Right lobe of liver (tissue), 6 donors: ENCODE measurements at regions of chr20 and their contacts with region 1.

Region 1: GRCh38 chr20:45373353-45374100 is 4.6 kb downstream of the TP53TG5 start:
- DNase-seq: peak; percentile 91 to 93 (median 92)
- ATAC-seq: peak; percentile 89 to 94 (median 92)
- H3K4me3 ChIP-seq: peak overlapping the region; percentile 45 to 59 (median 58)
- H3K27ac ChIP-seq: peak overlapping the region; percentile 22 to 60 (median 24)
- H3K4me1 ChIP-seq: peaks cover 0 to 7% (median 3%) of the 10 kb centered on the region in 4 donors
- H3K27me3 ChIP-seq: no peaks in the 10 kb centered on the region
- CTCF ChIP-seq: peak; percentile 81 to 94 (median 92)
- POLR2A ChIP-seq: no peak

Region 2: DNA sequence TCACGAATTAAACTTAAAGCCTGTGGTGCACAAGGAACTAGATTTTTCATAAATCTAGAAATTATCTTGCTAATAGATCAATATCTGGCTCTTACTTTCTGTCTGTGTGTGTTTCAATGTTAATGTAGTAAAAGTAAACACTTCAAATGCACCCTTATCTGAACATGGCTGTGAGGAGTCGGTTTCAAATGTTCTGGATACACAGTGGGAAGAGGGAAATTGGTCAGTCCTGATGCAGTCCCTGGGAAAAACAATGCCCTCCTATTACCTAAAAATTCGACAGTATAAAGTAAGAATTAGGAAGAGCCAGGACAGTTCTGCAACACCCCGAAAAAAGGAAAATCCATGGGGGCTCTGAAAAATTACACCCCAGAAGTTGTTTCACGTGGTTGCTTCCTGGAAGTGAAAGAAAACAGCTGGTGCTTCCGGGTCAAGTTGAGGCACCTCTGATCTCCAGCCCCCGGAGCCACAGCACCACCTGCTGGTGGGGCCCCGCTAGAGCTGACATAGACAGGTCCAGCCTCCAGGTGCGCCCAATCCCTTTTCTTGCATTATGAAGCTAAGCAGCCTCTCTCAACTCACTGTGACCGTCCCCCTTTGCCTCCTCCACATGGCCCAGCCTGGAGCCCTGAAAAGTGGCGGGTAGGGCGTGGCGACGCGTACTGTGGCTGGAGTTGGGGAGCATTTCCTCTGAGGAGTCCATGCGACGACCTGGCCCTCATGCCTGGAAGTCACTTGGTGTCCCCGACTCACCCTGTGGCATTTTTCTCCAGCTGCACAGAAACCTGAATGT is 144.1 kb before region 1 on chr20:
- intact Hi-C with region 1: no loop called
- DNase-seq: peak in 1 of 3 donors; percentile 46
- ATAC-seq: peak; percentile 60 to 64 (median 63)
- H3K4me3 ChIP-seq: no peak overlapping the region
- H3K27ac ChIP-seq: no peak overlapping the region
- H3K4me1 ChIP-seq: no peaks in the 10 kb centered on the region
- H3K27me3 ChIP-seq: no peaks in the 10 kb centered on the region
- CTCF ChIP-seq: peak; percentile 38 to 66 (median 48)
- POLR2A ChIP-seq: no peak

Region 3: GRCh38 chr20:45311589-45312211 is 61.8 kb before region 1 on chr20:
- intact Hi-C with region 1: no loop called
- DNase-seq: peak; percentile 66 to 72 (median 72)
- ATAC-seq: peak; percentile 79 to 92 (median 88)
- H3K4me3 ChIP-seq: no peak overlapping the region
- H3K27ac ChIP-seq: no peak overlapping the region
- H3K4me1 ChIP-seq: peaks cover 0 to 3% (median 0%) of the 10 kb centered on the region in 4 donors
- H3K27me3 ChIP-seq: peaks cover 0 to under 1% of the 10 kb centered on the region in 2 donors
- CTCF ChIP-seq: peak; percentile 60 to 79 (median 77)
- POLR2A ChIP-seq: no peak

Region 4: DNA sequence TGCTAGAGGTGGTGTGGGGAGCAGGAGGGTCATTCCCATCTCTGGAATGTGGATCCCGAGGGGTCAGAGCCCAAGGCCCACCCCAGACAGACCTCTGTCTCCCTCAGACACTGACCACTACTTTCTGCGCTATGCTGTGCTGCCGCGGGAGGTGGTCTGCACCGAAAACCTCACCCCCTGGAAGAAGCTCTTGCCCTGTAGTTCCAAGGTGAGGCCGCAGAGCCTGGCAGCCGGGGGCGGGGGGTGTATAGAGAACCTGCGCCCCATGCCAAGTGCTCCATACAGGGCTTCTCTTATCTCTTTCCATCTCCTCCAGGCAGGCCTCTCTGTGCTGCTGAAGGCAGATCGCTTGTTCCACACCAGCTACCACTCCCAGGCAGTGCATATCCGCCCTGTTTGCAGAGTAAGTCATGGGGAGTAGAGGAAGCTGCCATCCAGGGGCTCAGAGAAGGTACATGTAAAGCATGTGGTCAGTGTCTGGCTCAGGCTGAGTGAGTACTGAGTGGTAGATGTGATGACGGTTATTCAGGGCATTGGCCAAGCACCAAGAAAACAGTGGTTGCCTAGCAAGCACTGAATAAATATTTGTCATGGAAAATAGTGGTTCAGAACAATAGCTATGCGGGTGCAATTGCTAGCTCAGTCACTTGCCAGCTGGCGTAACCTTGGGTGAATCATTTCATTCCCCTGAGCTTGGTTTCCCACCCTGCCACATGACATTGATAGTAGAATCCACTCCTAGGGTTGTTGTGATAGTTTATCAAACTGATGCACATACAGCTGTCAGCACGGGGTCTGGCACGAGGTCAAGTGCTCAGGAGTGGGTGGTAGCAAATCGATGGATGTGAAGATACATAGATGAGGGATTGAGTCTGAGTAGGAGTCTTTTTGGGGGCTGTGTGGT is 45.9 kb after region 1 on chr20:
- intact Hi-C with region 1: loop called in 1 of 2 experiments (anchors 10 kb)
- DNase-seq: peak in 2 of 3 donors; percentile 45 to 64
- ATAC-seq: peak; percentile 68 to 83 (median 80)
- H3K4me3 ChIP-seq: no peak overlapping the region
- H3K27ac ChIP-seq: peak overlapping the region in 1 of 3 donors; percentile 15
- H3K4me1 ChIP-seq: peaks cover 0 to 21% (median 6%) of the 10 kb centered on the region in 4 donors
- H3K27me3 ChIP-seq: no peaks in the 10 kb centered on the region
- CTCF ChIP-seq: no peak
- POLR2A ChIP-seq: no peak

Region 5: DNA sequence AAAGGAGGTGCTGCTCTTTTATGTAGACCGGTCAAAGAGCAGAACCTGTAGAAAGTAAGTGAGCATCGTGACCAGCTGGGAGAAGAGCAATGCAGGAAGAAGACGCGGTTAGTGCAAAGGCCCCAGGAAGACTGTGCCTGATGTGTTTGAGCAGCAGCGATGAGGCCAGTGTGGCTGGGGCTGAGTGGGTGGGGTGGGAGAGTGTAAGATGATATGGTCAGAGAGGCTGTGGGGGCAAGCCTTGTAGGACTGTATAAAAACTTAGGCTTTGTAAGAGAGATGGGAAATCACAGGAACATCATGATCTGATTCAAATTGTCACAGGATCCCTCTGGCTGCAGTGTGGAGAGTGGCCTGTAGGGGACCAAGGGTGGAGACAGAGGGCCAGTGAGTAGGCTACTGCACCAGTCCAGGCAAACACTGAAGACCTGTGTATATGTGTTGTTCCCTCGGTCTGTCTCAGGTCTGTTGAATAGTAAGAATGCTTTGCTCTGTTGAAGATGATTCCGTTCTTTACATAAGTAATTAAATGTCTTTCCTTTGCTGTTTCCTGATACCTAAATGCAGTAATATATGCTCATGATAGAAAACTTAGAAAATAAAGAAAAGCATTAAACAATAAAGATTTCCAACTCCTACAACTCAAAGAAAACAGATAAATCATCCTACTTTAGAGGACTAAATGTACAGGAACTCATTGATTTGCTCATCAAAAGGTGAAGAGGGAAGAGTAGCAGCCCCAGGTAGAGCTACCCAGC is 72.5 kb after region 1 on chr20:
- intact Hi-C with region 1: loop called in 1 of 2 experiments (anchors 10 kb)
- DNase-seq: no peak
- ATAC-seq: peak; percentile 58 to 79 (median 78)
- H3K4me3 ChIP-seq: no peak overlapping the region
- H3K27ac ChIP-seq: no peak overlapping the region
- H3K4me1 ChIP-seq: no peaks in the 10 kb centered on the region
- H3K27me3 ChIP-seq: no peaks in the 10 kb centered on the region
- CTCF ChIP-seq: peak; percentile 33 to 49 (median 46)
- POLR2A ChIP-seq: no peak